ENCODE measurements at regions of chr21 and their contacts with region 1.

Region 1: DNA sequence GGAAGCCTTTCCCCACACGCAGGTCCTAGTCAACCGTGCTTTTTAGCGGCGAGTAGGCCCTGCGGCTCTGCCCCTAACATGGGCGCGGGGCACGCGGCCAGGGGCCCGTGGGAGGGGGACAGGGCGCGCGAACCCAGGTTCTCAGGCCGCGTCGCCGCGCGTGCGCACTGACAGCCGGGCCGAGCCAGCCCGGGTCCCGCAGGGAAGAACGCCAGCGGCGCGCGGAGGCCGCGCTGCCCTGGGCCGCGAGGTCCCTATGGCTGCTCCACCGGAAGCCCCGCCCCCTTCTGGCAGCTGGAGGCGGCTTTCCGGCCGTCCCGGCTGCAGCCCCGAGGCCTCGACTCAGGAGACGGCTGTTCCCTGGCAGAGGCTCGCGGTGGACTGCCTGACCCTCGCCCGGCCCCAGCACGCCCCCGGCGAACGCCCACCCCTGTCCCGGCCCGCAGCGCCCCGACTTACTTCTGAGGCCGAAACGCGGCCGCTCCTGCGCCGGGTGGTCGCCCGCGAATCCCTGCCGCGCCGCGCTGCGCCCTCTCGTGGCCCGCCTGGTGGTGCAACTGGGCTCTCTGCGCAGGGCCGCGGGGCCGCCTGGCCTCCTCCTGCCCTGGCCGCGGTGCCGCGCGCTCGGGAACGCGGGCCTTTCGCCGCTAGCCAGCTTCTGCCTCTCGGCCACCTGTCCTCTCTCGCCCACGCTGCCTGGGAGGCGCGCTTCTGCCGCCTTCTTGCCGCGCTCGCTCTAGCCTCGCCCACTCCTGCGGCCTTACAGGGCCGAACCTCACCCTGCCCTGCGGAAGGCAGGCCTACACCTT is 16.6 kb upstream of the RIPPLY3 start:
- DNase-seq: peak; percentile 88
- H3K4me3 ChIP-seq: peak overlapping the region; percentile 56 to 68
- H3K27ac ChIP-seq: peak overlapping the region; percentile 89 to 93
- H3K4me1 ChIP-seq: no peaks in the 10 kb centered on the region
- H3K27me3 ChIP-seq: no peaks in the 10 kb centered on the region
- CTCF ChIP-seq: peak; percentile 87 to 94 (median 90)
- POLR2A ChIP-seq: no peak

Region 2: GRCh38 chr21:36927719-36928117 is 62.2 kb before region 1 on chr21:
- intact Hi-C with region 1: loop called (anchors 10 kb)
- DNase-seq: peak; percentile 89
- H3K4me3 ChIP-seq: no peak overlapping the region
- H3K27ac ChIP-seq: peak overlapping the region; percentile 57 to 72
- H3K4me1 ChIP-seq: peaks cover 7% of the 10 kb centered on the region
- H3K27me3 ChIP-seq: no peaks in the 10 kb centered on the region
- CTCF ChIP-seq: peak; percentile 78 to 93 (median 90)
- POLR2A ChIP-seq: no peak

Region 3: DNA sequence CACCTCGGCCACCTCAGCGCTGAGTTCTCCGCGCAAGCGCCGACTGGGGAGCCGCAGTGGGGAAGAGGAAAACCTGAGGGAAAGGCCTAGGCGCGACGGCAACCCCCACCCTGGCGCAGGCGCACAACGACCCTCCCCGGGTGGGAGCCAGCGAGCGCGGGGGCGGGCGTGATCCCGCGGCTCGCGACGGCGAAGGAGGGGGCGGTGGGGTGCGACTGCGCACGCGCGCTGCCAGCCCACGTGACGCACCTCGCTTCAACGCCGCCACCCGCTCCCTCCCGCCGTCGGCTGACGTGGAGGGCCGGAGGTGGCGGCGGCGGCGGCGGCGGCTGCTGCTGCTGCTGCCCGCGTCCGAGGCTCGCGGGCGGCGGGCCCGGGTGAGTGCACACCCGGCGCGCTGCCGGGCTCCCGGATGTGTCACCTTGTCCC is 83.1 kb after region 1 on chr21 and contains the starts of genes PIGP and TTC3:
- intact Hi-C with region 1: loop called (anchors 1 kb)
- DNase-seq: peak; percentile 92
- H3K4me3 ChIP-seq: peak within 1 kb of the TSS; percentile 87 to 96
- H3K27ac ChIP-seq: peak within 1 kb of the TSS; percentile 96 to 99
- H3K4me1 ChIP-seq: peaks cover 6% of the 10 kb centered on the region
- H3K27me3 ChIP-seq: no peaks in the 10 kb centered on the region
- CTCF ChIP-seq: peak in 1 of 4 experiments; percentile 16
- POLR2A ChIP-seq: peak; percentile 95
- total RNA-seq, gene PIGP: 18.0 to 54.5 TPM
- total RNA-seq, gene TTC3: 169 to 201 TPM

Region 4: DNA sequence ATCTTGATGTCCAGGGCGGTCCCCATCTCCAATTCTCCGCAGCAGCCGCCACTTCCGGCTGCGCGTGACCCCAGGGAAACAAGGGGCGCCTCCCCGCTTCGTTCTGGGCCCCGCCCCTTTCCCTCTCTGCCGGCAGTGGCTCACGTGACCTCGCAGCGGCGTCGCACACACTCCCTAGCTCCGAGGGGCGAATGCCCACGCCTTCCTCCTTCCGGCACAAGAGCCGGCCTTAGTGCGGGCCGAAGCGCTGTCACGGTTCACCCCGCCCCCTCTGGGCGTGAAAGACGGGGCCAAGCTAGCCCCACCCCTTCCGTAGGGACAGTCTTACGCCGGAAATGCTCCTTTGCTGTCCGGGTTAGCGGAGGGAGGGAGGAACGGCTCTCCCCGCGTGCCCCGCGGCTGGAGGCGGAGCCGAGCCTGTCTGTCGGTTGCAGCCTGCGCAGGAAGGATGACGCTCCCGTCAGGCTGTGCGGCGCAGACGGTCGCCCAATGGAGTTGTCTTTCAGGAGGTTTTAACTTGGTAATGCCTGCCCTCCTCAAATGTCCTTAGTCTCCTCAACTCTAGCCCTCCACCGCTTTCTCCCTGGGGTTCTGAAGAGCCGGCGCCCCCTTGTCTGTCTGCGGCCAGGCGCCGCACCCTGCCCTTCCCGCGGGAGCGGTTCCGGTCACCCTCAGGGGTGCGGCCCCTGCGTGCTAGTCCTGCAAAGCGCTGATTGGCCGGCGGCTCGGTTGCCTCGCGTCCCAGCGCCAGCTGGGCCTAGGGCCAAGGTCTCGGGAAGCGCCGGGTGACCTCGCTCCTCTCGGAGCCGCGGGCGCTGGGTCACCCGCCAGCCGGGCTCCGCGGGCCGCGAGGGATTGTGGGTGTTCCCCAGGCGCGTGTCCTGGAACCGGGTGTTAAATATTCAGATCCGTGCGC is 277.6 kb after region 1 on chr21 and contains the start of gene VPS26C:
- intact Hi-C with region 1: loop called (anchors 2 kb)
- DNase-seq: peak; percentile 98
- H3K4me3 ChIP-seq: peak within 1 kb of the TSS; percentile 74 to 81
- H3K27ac ChIP-seq: peak within 1 kb of the TSS; percentile 94 to 96
- H3K4me1 ChIP-seq: peaks cover 4% of the 10 kb centered on the region
- H3K27me3 ChIP-seq: no peaks in the 10 kb centered on the region
- CTCF ChIP-seq: peak in 1 of 4 experiments; percentile 3
- POLR2A ChIP-seq: peak; percentile 75
- total RNA-seq, gene VPS26C: 36.8 to 46.1 TPM

Region 5: GRCh38 chr21:37563641-37564340 is 573.9 kb after region 1 on chr21:
- intact Hi-C with region 1: loop called (anchors 10 kb)
- DNase-seq: peak; percentile 93
- H3K4me3 ChIP-seq: peak overlapping the region; percentile 54 to 55
- H3K27ac ChIP-seq: peak overlapping the region; percentile 77 to 86
- H3K4me1 ChIP-seq: no peaks in the 10 kb centered on the region
- H3K27me3 ChIP-seq: no peaks in the 10 kb centered on the region
- CTCF ChIP-seq: peak in 3 of 4 experiments; percentile 35 to 61 (median 54)
- POLR2A ChIP-seq: peak; percentile 68